ENCODE measurements at regions of chr17 and their contacts with region 1.

Region 1: GRCh38 chr17:10844621-10845387 is 6.9 kb upstream of the PIRT start:
- DNase-seq: peak; percentile 49
- H3K4me3 Mint-ChIP-seq: peak overlapping the region; percentile 69
- H3K27ac Mint-ChIP-seq: no peak overlapping the region
- H3K4me1 Mint-ChIP-seq: peaks cover 6% of the 10 kb centered on the region
- H3K27me3 Mint-ChIP-seq: peaks cover 12% of the 10 kb centered on the region

Region 2: GRCh38 chr17:10631048-10631700 is 213.6 kb before region 1 on chr17:
- intact Hi-C with region 1: loop called (anchors 5 kb)
- DNase-seq: no peak
- H3K4me3 Mint-ChIP-seq: no peak overlapping the region
- H3K27ac Mint-ChIP-seq: no peak overlapping the region
- H3K4me1 Mint-ChIP-seq: peaks cover 9% of the 10 kb centered on the region
- H3K27me3 Mint-ChIP-seq: no peaks in the 10 kb centered on the region

Region 3: DNA sequence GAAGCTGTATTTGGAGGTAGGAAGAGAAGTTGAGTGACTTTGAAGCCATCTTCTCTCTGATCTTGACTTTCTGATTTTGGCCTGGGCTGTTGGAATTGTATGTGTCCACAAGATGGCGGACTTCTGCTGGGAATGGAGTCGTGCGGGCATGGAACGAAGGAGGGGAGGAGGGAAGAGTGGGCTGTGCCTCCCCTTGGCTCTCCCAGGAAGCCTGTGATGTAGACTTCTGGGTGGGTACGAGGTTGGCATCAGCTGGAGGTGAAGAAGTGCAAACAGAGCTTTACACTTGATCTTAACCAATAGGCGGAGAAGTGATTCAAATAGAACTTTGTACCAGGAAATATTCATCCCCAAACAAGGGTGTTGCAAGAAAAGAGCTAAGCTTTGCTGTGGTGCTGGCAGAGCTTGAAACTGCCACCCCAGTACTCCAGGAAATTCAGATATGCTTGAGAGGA is 107.6 kb before region 1 on chr17:
- intact Hi-C with region 1: loop called (anchors 1 kb)
- DNase-seq: no peak
- H3K4me3 Mint-ChIP-seq: no peak overlapping the region
- H3K27ac Mint-ChIP-seq: no peak overlapping the region
- H3K4me1 Mint-ChIP-seq: peaks cover 5% of the 10 kb centered on the region
- H3K27me3 Mint-ChIP-seq: peaks cover 18% of the 10 kb centered on the region

Region 4: GRCh38 chr17:10772425-10773380 is 72.1 kb before region 1 on chr17:
- intact Hi-C with region 1: loop called (anchors 1 kb)
- DNase-seq: no peak
- H3K4me3 Mint-ChIP-seq: no peak overlapping the region
- H3K27ac Mint-ChIP-seq: no peak overlapping the region
- H3K4me1 Mint-ChIP-seq: no peaks in the 10 kb centered on the region
- H3K27me3 Mint-ChIP-seq: no peaks in the 10 kb centered on the region

Region 5: DNA sequence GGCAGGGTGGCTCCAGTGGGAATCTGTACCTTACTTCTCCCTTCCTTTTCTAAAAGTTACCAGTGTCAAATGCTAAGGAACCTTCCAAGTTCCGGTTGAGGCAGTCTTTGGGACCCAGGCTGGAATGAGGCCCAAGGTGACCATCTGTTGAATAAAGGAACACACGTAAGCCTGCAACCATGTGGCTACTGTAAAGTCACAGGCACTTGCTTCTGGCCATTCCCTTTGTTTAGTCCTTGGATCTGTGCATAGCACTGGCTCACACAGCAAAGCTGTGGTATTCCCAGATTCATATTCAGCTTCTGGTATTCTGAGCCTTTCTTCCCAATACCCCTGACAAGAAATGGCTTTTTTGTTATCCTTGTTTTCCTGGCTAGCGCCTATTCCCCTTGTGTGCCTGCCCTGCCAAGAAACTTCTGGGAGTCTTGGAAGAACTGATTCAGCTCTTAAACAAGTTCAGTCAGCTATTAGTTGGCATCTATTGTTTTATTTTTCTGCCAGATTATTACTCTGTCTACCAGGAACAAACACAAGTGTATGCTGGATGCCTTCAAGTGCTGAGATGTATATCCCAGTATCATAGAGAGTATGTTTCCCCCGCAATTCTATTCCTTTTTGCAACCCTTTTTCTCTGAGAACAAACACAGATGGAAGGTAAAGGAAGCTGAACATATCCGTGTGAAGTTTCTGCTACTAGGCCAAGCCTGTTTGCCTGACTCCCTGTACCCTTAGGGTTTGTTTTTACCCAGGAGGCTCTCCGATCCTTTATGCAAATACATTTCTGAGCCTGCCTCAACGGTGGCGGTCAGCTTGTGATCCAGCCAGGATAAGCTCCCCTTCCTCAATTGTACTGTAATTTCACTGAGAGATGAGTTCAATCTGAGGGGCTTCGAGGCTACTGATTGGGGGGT is 54.1 kb before region 1 on chr17:
- intact Hi-C with region 1: no loop called
- DNase-seq: no peak
- H3K4me3 Mint-ChIP-seq: no peak overlapping the region
- H3K27ac Mint-ChIP-seq: no peak overlapping the region
- H3K4me1 Mint-ChIP-seq: no peaks in the 10 kb centered on the region
- H3K27me3 Mint-ChIP-seq: peaks cover 4% of the 10 kb centered on the region

Region 6: GRCh38 chr17:12545877-12546513 is 1701.2 kb after region 1 on chr17:
- intact Hi-C with region 1: no loop called
- DNase-seq: no peak
- H3K4me3 Mint-ChIP-seq: no peak overlapping the region
- H3K27ac Mint-ChIP-seq: no peak overlapping the region
- H3K4me1 Mint-ChIP-seq: no peaks in the 10 kb centered on the region
- H3K27me3 Mint-ChIP-seq: no peaks in the 10 kb centered on the region